Head of caudate nucleus (tissue), 42 donors: ENCODE measurements at regions of chr10 and their contacts with region 1.

Region 1: GRCh38 chr10:21495752-21496342 is 29.6 kb downstream of the SKIDA1 start:
- DNase-seq: peak; percentile 79 to 96 (median 89)

Region 2: DNA sequence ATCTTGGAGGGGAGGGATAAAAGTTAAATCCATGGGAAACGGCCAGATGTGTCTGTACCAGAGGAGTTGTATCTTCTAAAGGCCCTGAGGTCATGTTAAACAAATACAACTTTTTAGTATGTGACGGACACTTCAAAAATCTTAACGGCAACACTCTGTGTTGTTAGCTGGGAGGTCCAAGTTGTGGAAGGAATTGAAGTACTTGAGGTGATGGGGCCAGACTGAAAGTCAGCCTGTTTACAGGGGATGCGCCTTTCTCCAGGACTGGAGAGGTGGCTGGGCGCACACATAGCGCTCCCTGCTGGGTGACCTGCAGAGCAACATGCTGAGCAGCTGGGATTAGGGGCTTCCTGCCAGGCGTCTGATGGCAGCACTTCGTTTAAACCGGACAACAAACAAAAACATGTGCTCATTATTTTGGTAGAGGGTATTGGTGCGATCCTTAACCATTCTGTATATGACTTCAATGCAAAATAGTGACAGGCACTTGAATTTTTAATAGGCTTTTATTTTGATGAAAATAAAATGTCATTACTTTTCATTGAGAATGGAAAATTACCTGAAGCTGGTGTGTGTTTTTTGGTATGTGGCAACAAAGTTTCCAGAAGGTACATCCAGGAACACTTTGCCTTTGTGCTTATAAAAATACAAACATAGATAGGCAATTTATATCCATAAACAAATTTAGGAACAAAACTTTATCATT is 236.4 kb after region 1 on chr10:
- intact Hi-C with region 1: loop called (anchors 5 kb)
- DNase-seq: peak; percentile 29 to 84 (median 65)